B cell (primary cell): ENCODE measurements at regions of chr12 and their contacts with region 1.

Region 1: DNA sequence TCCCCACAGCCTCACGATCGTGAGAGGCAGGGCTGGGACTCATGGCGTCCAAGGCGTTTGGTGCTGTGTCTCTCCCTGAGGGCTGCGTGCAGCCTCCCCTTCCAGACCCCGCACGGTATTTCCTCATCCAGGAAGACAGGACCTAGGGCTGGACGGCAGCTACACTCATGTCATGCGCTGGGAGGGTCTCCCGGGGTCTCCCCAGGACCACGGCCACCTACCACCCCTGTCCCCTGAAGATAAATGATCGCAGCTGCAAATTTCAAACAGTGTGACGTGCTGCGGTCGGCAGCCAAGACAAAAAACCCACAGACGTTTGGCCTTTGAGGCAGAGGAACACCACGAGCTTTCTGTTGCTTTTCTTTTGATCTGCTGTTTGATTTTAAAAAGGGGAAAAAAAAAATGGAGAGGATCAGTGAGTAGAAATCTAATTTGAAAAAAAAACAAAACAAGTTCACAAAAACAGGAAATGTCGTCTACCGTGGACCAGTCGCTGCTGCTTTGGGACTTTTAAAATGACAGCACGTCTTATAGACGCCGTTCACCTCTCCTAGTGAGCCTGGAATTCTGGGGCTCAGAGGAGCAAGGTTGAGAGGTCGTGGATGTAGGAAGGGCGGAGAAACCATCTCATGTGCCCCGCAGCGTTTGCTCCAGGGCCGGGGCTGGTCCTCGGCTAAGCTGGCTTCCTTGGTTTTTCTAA is 237.6 kb downstream of the SLC41A2 start:
- DNase-seq: peak; percentile 79
- ATAC-seq: peak; percentile 64
- H3K4me3 ChIP-seq: peak overlapping the region; percentile 20 to 52 (median 47)
- H3K4me3 Mint-ChIP-seq: peak overlapping the region; percentile 86
- H3K27ac ChIP-seq: peak overlapping the region; percentile 54 to 73
- H3K27ac Mint-ChIP-seq: peak overlapping the region; percentile 87
- H3K4me1 ChIP-seq: peaks cover 32 to 49% of the 10 kb centered on the region in 2 donors
- H3K4me1 Mint-ChIP-seq: peaks cover 64% of the 10 kb centered on the region
- H3K27me3 ChIP-seq: no peaks in the 10 kb centered on the region
- H3K27me3 Mint-ChIP-seq: no peaks in the 10 kb centered on the region
- CTCF ChIP-seq: no peak

Region 2: DNA sequence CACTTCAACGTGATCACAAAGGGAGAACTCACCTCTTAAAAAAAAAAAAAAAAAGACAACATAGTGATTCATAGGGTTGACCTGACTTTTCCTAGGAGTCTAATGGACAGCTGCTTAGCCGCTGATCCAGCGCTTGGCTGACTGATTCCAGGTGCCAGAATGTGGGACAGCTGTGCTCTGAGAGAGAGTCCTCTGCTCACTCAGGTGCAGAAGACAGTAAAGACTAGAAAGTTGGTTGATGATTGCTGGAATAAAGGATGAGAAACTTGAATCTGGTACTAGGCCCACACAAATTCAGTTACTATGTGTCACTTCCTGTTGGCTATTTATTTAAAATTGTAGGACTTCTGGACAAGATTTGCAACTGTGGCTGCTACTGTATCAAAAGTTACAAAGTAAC is 34.3 kb before region 1 on chr12:
- CTCF ChIA-PET with region 1: no interaction called
- POLR2A ChIA-PET with region 1: no interaction called
- intact Hi-C with region 1: loop called (anchors 5 kb)
- DNase-seq: no peak
- ATAC-seq: no peak
- H3K4me3 ChIP-seq: no peak overlapping the region
- H3K4me3 Mint-ChIP-seq: no peak overlapping the region
- H3K27ac ChIP-seq: no peak overlapping the region
- H3K27ac Mint-ChIP-seq: no peak overlapping the region
- H3K4me1 ChIP-seq: peaks cover 43 to 46% of the 10 kb centered on the region in 2 donors
- H3K4me1 Mint-ChIP-seq: peaks cover 67% of the 10 kb centered on the region
- H3K27me3 ChIP-seq: no peaks in the 10 kb centered on the region
- H3K27me3 Mint-ChIP-seq: no peaks in the 10 kb centered on the region
- CTCF ChIP-seq: no peak

Region 3: DNA sequence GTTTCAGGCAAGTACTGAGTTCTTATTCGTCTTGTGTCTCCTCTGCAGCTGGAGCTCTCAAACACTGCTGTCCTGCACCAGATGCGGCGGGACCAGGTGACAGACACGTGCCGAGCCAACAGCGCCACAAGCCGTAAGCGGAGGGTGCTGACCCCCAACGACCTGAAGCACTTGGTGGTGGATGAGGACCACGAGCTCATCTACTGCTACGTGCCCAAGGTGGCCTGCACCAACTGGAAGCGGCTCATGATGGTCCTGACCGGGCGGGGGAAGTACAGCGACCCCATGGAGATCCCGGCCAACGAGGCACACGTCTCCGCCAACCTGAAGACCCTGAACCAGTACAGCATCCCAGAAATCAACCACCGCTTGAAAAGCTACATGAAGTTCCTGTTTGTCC is 36.4 kb after region 1 on chr12:
- CTCF ChIA-PET with region 1: no interaction called
- POLR2A ChIA-PET with region 1: no interaction called
- intact Hi-C with region 1: loop called (anchors 5 kb)
- DNase-seq: no peak
- ATAC-seq: no peak
- H3K4me3 ChIP-seq: no peak overlapping the region
- H3K4me3 Mint-ChIP-seq: no peak overlapping the region
- H3K27ac ChIP-seq: no peak overlapping the region
- H3K27ac Mint-ChIP-seq: no peak overlapping the region
- H3K4me1 ChIP-seq: peaks cover 3 to 7% of the 10 kb centered on the region in 2 donors
- H3K4me1 Mint-ChIP-seq: peaks cover 21% of the 10 kb centered on the region
- H3K27me3 ChIP-seq: no peaks in the 10 kb centered on the region
- H3K27me3 Mint-ChIP-seq: no peaks in the 10 kb centered on the region
- CTCF ChIP-seq: no peak